ENCODE measurements at regions of chr16 and their contacts with region 1.

Region 1: GRCh38 chr16:20806168-20807050 is at the starts of genes ERI2 and REXO5:
- DNase-seq: peak; percentile 88
- H3K4me3 ChIP-seq: peak within 1 kb of the TSS; percentile 99
- H3K27ac ChIP-seq: peak within 1 kb of the TSS; percentile 88
- H3K4me1 ChIP-seq: peaks cover 18% of the 10 kb centered on the region
- CTCF ChIP-seq: peak; percentile 74
- total RNA-seq, gene ERI2: 34.3 and 48.0 TPM in 2 replicates
- total RNA-seq, gene REXO5: 26.5 and 29.7 TPM in 2 replicates

Region 2: GRCh38 chr16:20741554-20742285 is 64.7 kb before region 1 on chr16 and contains the start of gene THUMPD1:
- CTCF ChIA-PET with region 1: no interaction called
- POLR2A ChIA-PET with region 1: no interaction called
- intact Hi-C with region 1: loop called (anchors 1 kb)
- DNase-seq: peak; percentile 96
- H3K4me3 ChIP-seq: peak within 1 kb of the TSS; percentile 92
- H3K27ac ChIP-seq: peak within 1 kb of the TSS; percentile 75
- H3K4me1 ChIP-seq: peaks cover 13% of the 10 kb centered on the region
- CTCF ChIP-seq: peak; percentile 40
- total RNA-seq, gene THUMPD1: 45.4 and 48.2 TPM in 2 replicates

Region 3: DNA sequence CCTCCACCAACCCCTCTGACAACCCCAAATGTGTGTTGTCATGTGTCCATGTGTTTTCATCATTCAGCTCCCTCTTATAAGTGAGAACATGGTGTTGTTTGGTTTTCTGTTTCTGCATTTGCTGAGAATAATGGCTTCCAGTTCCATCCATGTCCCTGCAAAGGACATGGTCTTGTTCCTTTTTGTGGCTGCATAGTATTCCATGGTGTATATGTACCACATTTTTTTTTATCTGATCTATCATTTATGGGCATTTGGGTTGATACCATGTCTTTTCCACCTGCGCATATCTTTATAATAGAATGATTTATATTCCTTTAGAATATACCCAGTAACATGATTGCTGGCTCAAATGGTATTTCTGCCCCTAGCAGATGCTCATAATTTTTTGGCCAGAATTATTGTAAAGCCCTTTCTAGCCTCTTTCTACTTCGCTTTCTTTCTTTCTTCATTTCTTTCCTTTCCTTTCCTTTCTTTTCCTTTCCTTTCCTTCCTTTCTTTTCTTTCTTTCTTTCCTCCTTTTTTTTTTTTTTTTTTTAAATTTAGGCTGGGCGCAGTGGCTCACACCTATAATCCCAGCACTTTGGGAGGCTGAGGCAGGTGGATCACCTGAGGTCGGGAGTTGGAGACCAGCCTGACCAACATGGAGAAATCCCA is 12.6 kb after region 1 on chr16:
- CTCF ChIA-PET with region 1: no interaction called
- POLR2A ChIA-PET with region 1: interaction called, 8 read pairs
- intact Hi-C with region 1: loop called (anchors 2 kb)
- DNase-seq: no peak
- H3K4me3 ChIP-seq: no peak overlapping the region
- H3K27ac ChIP-seq: no peak overlapping the region
- H3K4me1 ChIP-seq: peaks cover 7% of the 10 kb centered on the region
- CTCF ChIP-seq: no peak

Region 4: GRCh38 chr16:20849587-20850390 is 43.4 kb after region 1 on chr16:
- CTCF ChIA-PET with region 1: no interaction called
- POLR2A ChIA-PET with region 1: no interaction called
- intact Hi-C with region 1: no loop called
- DNase-seq: peak; percentile 56
- H3K4me3 ChIP-seq: no peak overlapping the region
- H3K27ac ChIP-seq: no peak overlapping the region
- H3K4me1 ChIP-seq: no peaks in the 10 kb centered on the region
- CTCF ChIP-seq: peak; percentile 99

Region 5: DNA sequence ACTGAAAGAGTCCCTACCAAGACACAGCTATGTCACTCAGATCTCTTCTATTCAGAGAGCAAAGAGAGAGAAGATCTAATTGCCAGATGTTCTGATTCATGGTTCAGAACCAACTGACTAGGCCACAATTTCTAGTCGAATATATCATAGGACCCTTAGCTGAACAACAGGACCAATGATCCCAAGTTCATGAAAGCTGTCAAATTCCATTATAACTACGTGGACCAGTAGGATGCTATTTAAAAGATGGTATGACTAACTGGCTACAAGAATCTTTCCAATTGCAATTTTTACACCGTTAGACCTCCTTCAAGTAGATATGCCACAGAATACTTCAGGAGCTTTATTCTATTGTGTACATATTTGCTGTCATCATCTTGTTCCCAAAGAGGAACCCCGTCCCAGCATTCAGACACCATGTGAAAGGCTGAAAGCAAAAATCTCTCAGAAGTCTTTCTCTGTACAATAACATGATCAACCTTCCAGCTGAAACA is 67.7 kb after region 1 on chr16:
- CTCF ChIA-PET with region 1: no interaction called
- POLR2A ChIA-PET with region 1: no interaction called
- intact Hi-C with region 1: loop called (anchors 2 kb)
- DNase-seq: no peak
- H3K4me3 ChIP-seq: peak overlapping the region; percentile 39
- H3K27ac ChIP-seq: peak overlapping the region; percentile 69
- H3K4me1 ChIP-seq: peaks cover 24% of the 10 kb centered on the region
- CTCF ChIP-seq: no peak

Region 6: DNA sequence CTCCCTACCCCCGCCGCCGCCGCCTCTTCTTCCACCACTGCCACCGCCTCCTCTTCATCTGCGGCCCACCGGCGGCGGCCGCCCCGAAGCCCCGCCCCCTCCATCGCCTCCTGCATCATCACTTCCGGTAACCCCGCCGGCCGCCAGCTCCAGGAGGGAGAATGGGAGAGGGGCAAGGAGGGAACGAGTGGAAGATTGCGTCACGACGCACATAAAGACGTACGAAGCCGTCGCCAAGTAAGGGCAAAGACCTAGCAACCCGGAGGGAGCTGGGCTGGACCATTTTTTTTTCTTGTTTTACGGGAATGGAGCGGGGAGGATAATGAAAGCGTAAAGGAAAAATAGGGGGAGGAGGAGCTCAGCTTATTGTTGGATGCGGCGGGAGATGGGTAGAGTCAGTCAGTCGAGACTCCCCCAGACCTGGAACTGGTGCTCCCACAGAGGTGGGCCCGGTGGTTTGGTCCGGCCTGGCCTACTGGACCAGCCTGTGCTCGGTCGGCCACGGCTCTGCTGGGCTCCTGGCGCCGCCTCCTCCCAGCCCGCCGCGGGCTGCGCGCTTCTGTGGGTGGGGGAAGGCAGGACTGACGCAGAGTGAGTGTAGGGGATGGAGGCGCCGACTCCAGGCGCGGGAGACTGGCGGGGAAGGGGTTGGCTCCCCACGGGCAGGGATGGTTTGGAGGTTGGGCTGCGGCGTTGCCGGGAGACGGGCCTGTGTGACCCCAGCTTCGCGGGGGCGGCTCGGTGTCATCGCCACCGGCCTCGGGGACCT is 94.1 kb after region 1 on chr16 and contains the starts of genes DCUN1D3 and LYRM1:
- CTCF ChIA-PET with region 1: no interaction called
- POLR2A ChIA-PET with region 1: interaction called, 5 read pairs
- intact Hi-C with region 1: loop called (anchors 10 kb)
- DNase-seq: peak; percentile 95
- H3K4me3 ChIP-seq: peak within 1 kb of the TSS; percentile 75
- H3K27ac ChIP-seq: peak within 1 kb of the TSS; percentile 56
- H3K4me1 ChIP-seq: peaks cover 50% of the 10 kb centered on the region
- CTCF ChIP-seq: no peak
- total RNA-seq, gene DCUN1D3: 3.1 and 3.3 TPM in 2 replicates
- total RNA-seq, gene LYRM1: 24.0 and 24.3 TPM in 2 replicates

Region 7: GRCh38 chr16:20976576-20976975 is 170.2 kb after region 1 on chr16:
- CTCF ChIA-PET with region 1: no interaction called
- POLR2A ChIA-PET with region 1: no interaction called
- intact Hi-C with region 1: no loop called
- DNase-seq: no peak
- H3K4me3 ChIP-seq: no peak overlapping the region
- H3K27ac ChIP-seq: no peak overlapping the region
- H3K4me1 ChIP-seq: no peaks in the 10 kb centered on the region
- CTCF ChIP-seq: no peak

Measured in OCI-LY7 (cell line).